ENCODE measurements at regions of chr17 and their contacts with region 1.

Region 1: GRCh38 chr17:20992987-20993862 is 49.6 kb downstream of the USP22 start:
- DNase-seq: peak; percentile 54 to 84 (median 78)
- ATAC-seq: peak; percentile 80 to 96 (median 88)
- H3K4me3 ChIP-seq: no peak overlapping the region
- H3K27ac ChIP-seq: no peak overlapping the region
- H3K4me1 ChIP-seq: no peaks in the 10 kb centered on the region
- H3K27me3 ChIP-seq: no peaks in the 10 kb centered on the region
- CTCF ChIP-seq: peak; percentile 80 to 95 (median 89)

Region 2: GRCh38 chr17:20944014-20944865 is 49.0 kb before region 1 on chr17:
- intact Hi-C with region 1: loop called in 1 of 3 experiments (anchors 5 kb)
- DNase-seq: peak; percentile 79 to 94 (median 84)
- ATAC-seq: peak; percentile 98 to 100 (median 100)
- H3K4me3 ChIP-seq: no peak overlapping the region
- H3K27ac ChIP-seq: no peak overlapping the region
- H3K4me1 ChIP-seq: no peaks in the 10 kb centered on the region
- H3K27me3 ChIP-seq: no peaks in the 10 kb centered on the region
- CTCF ChIP-seq: peak; percentile 51 to 67 (median 54)

Region 3: DNA sequence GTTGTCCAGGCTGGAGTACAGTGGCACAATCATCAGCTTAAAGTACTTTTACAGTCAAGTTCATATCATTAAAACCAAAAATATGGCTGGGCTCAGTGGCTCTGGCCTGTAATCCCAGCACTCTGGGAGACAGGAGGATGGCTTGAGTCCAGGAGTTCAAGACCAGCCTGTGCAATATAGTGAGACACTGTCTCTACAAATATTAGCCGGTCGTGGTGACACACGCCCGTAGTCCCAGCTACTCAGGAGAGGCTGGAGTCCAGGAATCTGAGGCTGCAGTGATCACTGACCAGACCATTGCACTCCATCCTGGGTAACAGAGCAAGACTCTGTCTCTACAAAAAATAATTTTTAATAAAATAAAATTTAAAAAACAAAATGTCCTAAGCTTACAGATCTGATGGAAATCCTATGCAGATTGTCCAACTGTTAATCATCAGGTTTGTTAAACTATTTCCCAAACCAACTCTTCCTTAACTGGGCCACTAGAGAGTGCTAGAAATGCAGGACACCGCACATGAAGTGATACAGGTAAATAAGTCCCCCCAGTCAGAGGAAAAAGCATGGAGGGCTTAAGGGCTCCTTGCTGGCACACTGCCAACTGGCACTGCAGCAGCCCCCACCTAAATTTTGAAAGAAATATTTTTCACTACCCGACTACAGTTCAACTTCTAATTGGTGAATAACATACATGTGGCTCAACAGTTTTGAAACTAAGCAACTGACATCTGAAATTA is 46.8 kb after region 1 on chr17:
- intact Hi-C with region 1: loop called in 1 of 3 experiments (anchors 5 kb)
- DNase-seq: no peak
- ATAC-seq: no peak
- H3K4me3 ChIP-seq: peak overlapping the region in 2 of 4 donors; percentile 93 to 96
- H3K27ac ChIP-seq: peak overlapping the region in 1 of 4 donors; percentile 9
- H3K4me1 ChIP-seq: peaks cover 7 to 47% (median 22%) of the 10 kb centered on the region in 3 donors
- H3K27me3 ChIP-seq: no peaks in the 10 kb centered on the region
- CTCF ChIP-seq: peak in 1 of 4 donors; percentile 18